H1 (cell line): ENCODE measurements at regions of chr15 and their contacts with region 1.

Region 1: DNA sequence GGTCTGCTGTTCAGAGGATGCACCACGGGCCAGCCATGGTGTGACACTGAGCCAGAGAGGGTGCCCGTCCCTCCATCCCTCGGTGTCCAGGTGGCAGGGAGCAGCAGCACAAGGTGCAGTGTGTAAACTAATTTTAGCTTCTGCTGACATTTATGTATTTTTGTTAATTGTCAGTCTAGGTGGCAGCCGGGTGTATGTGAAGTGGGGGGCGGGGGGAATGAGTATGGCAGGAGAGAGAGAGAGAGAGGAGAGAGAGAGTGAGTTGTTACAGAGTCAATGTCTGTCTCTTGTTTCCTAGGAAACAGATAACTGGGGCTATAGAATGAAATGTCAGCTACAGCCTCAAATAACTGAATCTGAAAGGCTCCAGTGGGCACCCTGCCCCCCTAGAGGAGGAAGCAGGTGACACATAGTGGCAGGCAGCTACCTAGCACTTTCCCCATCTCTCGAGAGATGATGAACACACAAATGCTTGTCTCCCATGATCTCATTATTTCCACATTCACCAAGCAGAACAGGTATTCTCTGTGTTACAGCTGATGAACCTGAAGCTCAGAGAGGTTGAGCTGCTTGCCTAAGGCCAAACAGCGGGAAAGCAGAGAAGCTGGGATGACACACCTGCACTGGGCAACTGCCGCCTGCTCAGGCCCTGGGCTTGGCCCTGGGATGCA is 24.7 kb downstream of the RASGRF1 start:
- DNase-seq: no peak
- H3K4me3 ChIP-seq: no peak overlapping the region
- H3K27ac ChIP-seq: no peak overlapping the region
- H3K4me1 ChIP-seq: peaks cover 2 to 3% (median 3%) of the 10 kb centered on the region in 4 experiments; a peak in 5 of 7 replicates
- H3K27me3 ChIP-seq: peaks cover 6 to 15% (median 13%) of the 10 kb centered on the region in 4 experiments; a peak in 6 of 7 replicates
- CTCF ChIP-seq: no peak
- EP300 ChIP-seq: no peak
- POLR2A ChIP-seq: no peak
- RAD21 ChIP-seq: no peak; a peak in 1 of 4 replicates

Region 2: GRCh38 chr15:79017953-79018352 is 47.9 kb before region 1 on chr15:
- CTCF ChIA-PET with region 1: no interaction called
- POLR2A ChIA-PET with region 1: no interaction called
- DNase-seq: no peak
- H3K4me3 ChIP-seq: no peak overlapping the region
- H3K27ac ChIP-seq: no peak overlapping the region
- H3K4me1 ChIP-seq: no peaks in the 10 kb centered on the region; a peak in 1 of 7 replicates
- H3K27me3 ChIP-seq: no peaks in the 10 kb centered on the region
- CTCF ChIP-seq: no peak
- EP300 ChIP-seq: no peak
- POLR2A ChIP-seq: no peak
- RAD21 ChIP-seq: no peak

Region 3: DNA sequence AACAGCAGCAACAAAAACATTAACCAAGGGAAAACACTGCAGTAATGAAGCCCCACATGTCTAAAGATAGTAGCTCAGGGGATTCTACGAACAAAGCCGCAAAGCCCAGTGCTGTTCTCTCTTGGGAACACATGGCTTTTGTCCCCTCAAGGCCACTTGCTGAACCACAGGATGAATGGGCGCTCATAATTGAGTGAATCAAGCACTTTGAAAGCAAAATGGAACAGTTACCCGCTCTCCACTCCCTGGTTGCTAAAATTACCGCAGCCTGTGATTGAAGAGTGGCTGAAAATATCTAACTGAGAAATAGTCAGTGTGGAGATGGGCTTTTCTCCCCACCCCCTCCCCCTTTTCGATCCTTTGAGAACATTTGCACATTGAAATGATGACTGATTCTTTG is 14.8 kb before region 1 on chr15:
- CTCF ChIA-PET with region 1: interaction called, 15 read pairs
- POLR2A ChIA-PET with region 1: no interaction called
- DNase-seq: no peak
- H3K4me3 ChIP-seq: no peak overlapping the region
- H3K27ac ChIP-seq: no peak overlapping the region
- H3K4me1 ChIP-seq: no peaks in the 10 kb centered on the region; a peak in 1 of 7 replicates
- H3K27me3 ChIP-seq: peaks cover 0 to 7% (median 2%) of the 10 kb centered on the region in 4 experiments; a peak in 3 of 7 replicates
- CTCF ChIP-seq: no peak
- EP300 ChIP-seq: no peak
- POLR2A ChIP-seq: no peak
- RAD21 ChIP-seq: no peak